ENCODE measurements at regions of chr11 and their contacts with region 1.

Region 1: GRCh38 chr11:133078591-133079404 is 453.5 kb downstream of the OPCML start:
- DNase-seq: no peak
- ATAC-seq: peak; percentile 83
- H3K4me3 ChIP-seq: peak overlapping the region in 1 of 2 experiments; percentile 9; a peak in 1 of 4 replicates
- H3K27ac ChIP-seq: no peak overlapping the region
- H3K4me1 ChIP-seq: no peaks in the 10 kb centered on the region
- H3K27me3 ChIP-seq: peaks cover 23% of the 10 kb centered on the region
- CTCF ChIP-seq: peak; percentile 95

Region 2: DNA sequence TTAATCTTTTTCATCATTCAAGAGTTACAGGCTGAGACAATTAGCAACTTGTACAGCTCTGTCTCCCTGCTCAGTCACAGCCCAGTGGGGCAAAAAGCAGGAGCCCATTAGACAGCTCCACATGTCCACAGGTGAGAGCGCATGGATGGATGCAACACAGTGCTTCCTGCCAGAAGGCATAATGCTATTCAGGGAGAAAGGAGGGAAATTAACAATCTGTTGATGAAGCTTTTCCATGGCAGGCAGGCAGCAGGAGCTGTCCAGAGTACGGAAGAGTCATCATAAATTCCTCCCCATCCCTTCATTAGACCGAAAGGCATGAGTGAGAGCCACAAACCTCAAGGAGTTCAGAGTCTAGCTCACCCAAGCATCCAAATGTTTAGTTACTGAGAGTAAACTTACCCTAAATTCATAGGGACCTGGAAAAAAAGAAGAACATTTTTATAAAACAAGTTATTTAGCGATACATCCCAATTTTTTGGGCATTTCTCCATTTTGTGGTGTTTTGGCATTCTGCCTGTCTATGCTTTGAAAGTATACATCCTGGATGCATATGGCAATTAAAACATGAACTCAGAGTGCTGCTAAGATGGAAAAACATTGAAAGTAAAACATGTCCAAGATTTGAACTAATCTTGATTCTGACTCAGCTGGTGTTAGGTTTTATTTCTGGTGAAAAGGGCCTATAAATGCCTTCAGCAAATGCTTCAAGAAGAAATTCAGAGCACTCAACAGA is 25.4 kb after region 1 on chr11:
- CTCF ChIA-PET with region 1: no interaction called
- POLR2A ChIA-PET with region 1: no interaction called
- in situ Hi-C with region 1: no loop called
- intact Hi-C with region 1: loop called (anchors 1 kb)
- DNase-seq: no peak
- ATAC-seq: no peak
- H3K4me3 ChIP-seq: no peak overlapping the region
- H3K27ac ChIP-seq: no peak overlapping the region
- H3K4me1 ChIP-seq: no peaks in the 10 kb centered on the region
- H3K27me3 ChIP-seq: no peaks in the 10 kb centered on the region
- CTCF ChIP-seq: no peak

Region 3: GRCh38 chr11:133163463-133164419 is 84.9 kb after region 1 on chr11:
- CTCF ChIA-PET with region 1: no interaction called
- POLR2A ChIA-PET with region 1: no interaction called
- in situ Hi-C with region 1: no loop called
- intact Hi-C with region 1: loop called (anchors 2 kb)
- DNase-seq: peak; percentile 15
- ATAC-seq: peak; percentile 90
- H3K4me3 ChIP-seq: no peak overlapping the region
- H3K27ac ChIP-seq: no peak overlapping the region
- H3K4me1 ChIP-seq: no peaks in the 10 kb centered on the region
- H3K27me3 ChIP-seq: peaks cover 8% of the 10 kb centered on the region
- CTCF ChIP-seq: peak; percentile 85

Region 4: DNA sequence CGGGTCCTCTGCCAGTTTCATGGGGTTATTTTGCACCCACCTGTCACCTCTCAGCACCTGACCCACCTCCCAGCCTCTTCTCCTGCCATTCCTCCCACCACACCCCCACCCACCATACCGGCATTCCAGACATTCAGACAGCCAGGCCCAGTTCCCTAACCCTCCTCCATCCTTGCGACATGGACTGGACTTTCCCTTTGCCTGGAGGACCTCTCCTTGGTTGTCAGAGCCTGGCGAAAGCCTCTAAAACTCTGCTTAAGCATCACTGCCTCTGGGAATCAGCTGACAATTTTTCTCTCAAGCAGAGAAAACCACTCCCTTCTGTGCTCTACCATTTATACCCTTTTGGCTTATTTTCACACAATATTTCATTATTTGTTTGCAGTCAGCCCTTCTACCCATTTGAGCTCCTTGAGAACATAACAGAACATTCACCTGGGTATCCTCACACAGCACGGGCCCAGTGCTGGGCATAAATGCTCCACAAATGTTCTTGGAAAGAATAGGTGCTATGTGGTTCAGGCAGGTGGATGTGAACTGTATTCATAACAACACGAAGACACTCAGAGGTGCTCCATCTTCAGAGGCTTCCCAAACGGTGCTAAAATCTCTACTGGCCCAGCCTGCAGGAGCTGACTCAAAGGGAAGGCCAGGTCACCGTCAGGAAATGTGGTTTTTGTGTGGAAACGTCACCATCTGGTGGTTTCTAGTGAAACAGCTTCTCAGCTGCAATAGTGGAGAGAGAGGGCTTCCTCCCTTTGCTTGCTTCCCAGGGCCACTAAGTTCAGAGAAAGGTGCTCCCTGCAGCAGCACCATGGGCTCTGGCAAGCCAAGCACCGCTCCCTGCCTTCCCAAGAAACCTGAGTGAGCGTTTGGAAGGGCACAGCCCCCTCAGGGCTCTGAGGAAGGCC is 756.1 kb after region 1 on chr11:
- CTCF ChIA-PET with region 1: interaction called, 15 read pairs
- POLR2A ChIA-PET with region 1: no interaction called
- in situ Hi-C with region 1: no loop called
- intact Hi-C with region 1: loop called (anchors 2 kb)
- DNase-seq: peak; percentile 41
- ATAC-seq: peak; percentile 93
- H3K4me3 ChIP-seq: no peak overlapping the region
- H3K27ac ChIP-seq: no peak overlapping the region
- H3K4me1 ChIP-seq: no peaks in the 10 kb centered on the region
- H3K27me3 ChIP-seq: peaks cover 2% of the 10 kb centered on the region; the same call in 1 of the 2 replicates
- CTCF ChIP-seq: peak; percentile 81